Dendritic cell treated with granulocyte-macrophage colony-stimulating factor and Interleukin-4, amounts not matched to agents 40 ng/mL and 50 ng/mL, for 4 days (primary cell): ENCODE measurements at regions of chr1 and their contacts with region 1.

Region 1: DNA sequence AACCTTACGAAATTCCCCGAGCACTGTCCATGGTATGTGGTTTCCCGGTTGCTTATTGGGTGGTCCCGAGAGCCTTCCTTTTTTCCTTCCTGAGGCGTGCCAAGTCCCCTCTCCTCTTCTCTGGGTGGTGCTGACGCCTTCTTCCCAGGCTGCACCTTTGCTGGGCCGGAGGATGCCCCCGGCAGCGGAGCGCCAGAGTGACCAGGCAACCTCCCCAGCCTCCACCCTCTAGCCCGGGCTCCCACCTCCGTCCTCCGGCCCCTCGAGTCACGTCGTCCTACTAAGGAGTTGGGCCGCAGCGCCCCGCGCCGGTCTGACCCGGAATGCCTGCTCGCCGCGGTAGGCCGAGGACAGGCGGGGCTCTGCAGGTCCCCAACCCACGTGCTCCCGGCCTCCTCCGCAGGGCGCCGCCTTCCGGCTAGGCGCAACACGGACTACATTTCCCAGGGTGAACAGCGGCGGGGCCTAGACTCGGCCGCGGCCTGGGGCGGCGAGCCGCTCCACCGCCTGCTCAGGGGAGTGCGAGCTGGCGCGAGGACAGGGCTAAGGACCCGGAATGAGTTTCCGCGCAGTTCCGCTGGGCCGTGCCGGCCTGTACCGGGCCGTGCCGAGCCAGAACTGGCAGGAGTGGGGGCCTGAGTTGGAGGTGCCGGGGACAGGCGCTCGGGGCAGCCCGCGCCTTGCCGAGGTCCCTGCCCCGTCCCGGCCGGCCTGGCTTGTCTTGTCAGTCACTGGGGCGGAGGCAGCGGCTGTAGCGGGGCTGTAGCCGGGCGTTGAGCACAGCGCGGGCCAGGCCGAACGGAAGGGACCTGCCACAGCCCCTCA is at the start of gene IPO13:
- H3K4me3 Mint-ChIP-seq: peak within 1 kb of the TSS; percentile 91
- H3K27ac Mint-ChIP-seq: peak within 1 kb of the TSS; percentile 93
- H3K4me1 Mint-ChIP-seq: peaks cover 79% of the 10 kb centered on the region
- H3K27me3 Mint-ChIP-seq: no peaks in the 10 kb centered on the region

Region 2: DNA sequence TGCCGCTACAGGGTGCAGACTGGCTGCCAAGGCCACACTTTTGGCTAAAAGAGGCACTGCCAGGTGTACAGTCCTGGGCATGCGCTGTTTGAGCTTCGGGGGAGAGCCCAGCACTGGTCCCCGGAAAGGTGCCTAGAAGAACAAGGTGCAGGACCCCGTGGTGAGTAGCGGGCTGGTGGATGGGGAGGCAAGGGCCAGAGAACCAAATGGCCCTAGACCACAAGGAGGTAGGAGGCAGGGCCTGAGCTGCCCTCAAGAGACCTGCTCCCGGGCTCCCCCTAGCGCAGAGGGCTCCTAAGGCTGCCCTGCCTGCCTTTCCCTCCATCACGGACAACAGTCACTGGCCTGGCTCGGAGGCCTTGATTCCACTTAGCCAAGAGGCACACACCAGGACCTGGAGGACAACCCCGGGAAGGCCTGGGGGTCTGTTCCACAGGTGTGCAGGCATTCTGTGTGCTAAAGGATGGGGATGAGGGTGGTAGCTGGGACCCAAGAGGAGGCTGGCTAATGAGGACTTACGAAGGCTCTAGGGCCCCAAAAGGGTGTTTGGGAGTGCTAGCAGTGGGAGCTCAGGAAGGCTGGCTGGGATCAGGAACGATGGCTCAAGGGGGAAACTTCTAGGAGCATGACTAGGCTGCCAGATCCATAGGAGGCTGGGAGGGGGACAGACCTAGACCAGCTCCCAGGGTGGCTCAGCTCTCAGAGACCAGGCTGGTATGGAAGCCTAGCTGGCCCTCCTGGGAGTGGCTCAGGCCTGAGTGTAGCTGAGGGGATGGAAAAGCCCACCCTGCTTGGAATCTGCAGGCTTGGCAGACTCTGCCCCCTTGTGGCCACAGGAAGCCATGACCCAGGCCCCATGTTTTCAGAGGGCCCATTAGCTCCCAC is 12.1 kb before region 1 on chr1:
- intact Hi-C with region 1: loop called (anchors 1 kb)
- H3K4me3 Mint-ChIP-seq: no peak overlapping the region
- H3K27ac Mint-ChIP-seq: no peak overlapping the region
- H3K4me1 Mint-ChIP-seq: peaks cover 32% of the 10 kb centered on the region
- H3K27me3 Mint-ChIP-seq: peaks cover 27% of the 10 kb centered on the region

Region 3: DNA sequence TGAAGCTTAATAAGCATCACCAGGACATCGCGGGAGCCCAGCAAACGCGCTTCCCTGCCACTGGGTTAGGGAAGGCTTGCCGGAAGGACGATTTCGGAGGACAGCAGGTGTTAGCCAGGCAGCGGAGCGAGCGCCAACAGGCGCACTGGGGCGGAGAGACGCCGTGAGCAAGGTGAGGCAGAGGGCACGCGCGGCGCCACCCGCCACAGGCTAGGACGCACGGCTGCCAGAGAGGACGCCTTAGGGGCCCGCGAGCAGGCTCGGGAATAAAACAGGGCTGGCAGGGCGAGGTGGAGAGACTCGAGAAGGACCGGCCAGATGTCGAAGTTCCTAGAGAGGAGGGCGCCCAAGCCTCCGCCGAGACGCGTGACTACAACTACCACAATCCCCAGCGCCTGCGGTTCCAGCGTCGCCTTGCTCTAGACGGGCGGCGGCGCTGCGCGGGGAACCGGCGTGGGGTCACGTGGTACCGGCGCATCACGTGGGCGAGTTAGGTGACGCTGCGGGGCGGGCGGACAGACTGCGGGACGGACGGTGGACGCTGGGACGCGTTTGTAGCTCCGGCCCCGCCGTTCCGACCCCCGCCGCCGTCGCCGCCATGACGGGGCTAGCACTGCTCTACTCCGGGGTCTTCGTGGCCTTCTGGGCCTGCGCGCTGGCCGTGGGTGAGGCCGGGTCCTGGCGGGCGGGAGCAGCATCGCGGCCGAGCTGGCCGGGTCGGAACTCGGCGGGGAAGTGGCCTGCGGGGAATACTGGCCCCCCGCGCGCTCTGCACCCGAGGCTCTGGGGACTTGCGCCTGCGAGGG is 28.2 kb after region 1 on chr1 and contains the start of gene ATP6V0B:
- intact Hi-C with region 1: loop called (anchors 1 kb)
- H3K4me3 Mint-ChIP-seq: peak within 1 kb of the TSS; percentile 86
- H3K27ac Mint-ChIP-seq: peak within 1 kb of the TSS; percentile 86
- H3K4me1 Mint-ChIP-seq: peaks cover 65% of the 10 kb centered on the region
- H3K27me3 Mint-ChIP-seq: no peaks in the 10 kb centered on the region

Region 4: DNA sequence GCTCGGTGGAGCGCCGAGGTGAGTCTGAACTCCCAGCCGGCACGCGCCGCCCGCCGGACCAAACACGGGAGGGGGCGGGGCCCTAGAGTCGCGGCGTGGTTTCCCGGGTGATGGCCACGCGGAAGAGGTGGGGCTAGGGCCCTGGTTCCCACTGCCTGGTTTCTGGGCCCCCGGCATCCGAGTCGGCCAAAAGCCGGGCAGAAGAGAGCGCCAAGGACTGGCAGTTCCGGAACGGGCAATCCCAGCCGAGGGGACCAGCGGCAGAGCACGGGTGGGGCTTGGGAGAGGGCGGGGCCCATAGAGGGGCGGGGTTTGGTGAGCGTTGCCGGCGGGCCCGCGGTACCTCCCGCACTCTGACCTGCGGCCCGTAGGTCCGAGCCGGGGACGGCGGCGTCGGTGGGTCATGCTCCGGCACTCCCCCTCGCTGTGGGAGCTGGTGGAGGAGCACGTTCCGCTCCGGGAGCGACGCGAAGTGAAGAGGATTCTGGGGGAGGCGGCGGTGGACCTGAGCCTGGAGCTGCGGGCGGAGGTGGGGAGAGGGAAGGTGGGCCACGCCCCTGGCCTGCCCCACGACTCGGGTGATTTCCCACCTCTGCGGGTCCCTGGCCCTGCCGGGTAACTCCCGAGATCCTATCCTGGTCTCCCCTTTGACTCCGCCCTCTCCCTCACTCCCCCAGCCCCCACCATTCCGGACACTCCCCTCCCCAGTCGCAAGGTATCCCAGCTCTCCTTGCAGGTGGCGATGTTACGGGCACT is 45.2 kb after region 1 on chr1 and contains the start of gene CCDC24:
- intact Hi-C with region 1: loop called (anchors 2 kb)
- H3K4me3 Mint-ChIP-seq: peak within 1 kb of the TSS; percentile 92
- H3K27ac Mint-ChIP-seq: peak within 1 kb of the TSS; percentile 83
- H3K4me1 Mint-ChIP-seq: peaks cover 29% of the 10 kb centered on the region
- H3K27me3 Mint-ChIP-seq: peaks cover 9% of the 10 kb centered on the region

Region 5: DNA sequence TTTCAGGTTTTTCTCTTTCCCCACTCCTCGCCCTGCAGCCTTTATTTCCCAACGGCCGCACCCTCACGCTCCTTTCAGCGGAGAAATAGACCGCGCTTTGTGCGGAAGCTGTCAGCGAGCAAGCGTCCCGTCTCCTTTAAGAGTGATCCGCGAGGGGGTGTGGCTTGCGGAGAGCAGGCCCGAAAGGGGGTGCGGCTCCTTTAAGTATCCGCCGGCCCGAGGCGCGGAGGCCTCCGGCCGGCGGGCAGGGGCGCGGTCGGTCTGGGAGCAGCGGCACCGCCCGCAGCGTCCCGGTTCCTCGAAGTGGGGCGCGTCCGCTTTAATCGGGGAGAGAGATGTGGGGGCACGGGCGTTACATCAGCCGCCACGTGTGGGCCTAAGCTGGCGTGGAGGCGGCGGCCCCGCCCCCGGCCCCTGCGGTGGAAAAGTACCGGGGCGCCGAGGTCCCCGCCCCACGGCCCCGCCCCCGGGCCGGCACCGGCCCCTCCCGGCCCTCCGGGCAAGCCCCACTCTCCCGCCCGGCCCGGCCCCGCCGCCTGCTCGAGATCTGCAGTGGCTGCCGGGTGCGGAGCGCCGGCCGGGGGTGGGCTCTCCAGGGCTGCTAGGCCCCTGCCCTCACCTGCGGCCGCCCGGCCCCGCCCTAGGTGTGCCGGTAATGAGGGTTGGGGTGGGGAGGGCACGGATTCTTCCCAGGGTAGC is 83.6 kb after region 1 on chr1:
- intact Hi-C with region 1: loop called (anchors 10 kb)
- H3K4me3 Mint-ChIP-seq: peak overlapping the region; percentile 93
- H3K27ac Mint-ChIP-seq: peak overlapping the region; percentile 83
- H3K4me1 Mint-ChIP-seq: peaks cover 34% of the 10 kb centered on the region
- H3K27me3 Mint-ChIP-seq: peaks cover 44% of the 10 kb centered on the region